PC-3 (cell line): ENCODE measurements at regions of chr1 and their contacts with region 1.

Region 1: DNA sequence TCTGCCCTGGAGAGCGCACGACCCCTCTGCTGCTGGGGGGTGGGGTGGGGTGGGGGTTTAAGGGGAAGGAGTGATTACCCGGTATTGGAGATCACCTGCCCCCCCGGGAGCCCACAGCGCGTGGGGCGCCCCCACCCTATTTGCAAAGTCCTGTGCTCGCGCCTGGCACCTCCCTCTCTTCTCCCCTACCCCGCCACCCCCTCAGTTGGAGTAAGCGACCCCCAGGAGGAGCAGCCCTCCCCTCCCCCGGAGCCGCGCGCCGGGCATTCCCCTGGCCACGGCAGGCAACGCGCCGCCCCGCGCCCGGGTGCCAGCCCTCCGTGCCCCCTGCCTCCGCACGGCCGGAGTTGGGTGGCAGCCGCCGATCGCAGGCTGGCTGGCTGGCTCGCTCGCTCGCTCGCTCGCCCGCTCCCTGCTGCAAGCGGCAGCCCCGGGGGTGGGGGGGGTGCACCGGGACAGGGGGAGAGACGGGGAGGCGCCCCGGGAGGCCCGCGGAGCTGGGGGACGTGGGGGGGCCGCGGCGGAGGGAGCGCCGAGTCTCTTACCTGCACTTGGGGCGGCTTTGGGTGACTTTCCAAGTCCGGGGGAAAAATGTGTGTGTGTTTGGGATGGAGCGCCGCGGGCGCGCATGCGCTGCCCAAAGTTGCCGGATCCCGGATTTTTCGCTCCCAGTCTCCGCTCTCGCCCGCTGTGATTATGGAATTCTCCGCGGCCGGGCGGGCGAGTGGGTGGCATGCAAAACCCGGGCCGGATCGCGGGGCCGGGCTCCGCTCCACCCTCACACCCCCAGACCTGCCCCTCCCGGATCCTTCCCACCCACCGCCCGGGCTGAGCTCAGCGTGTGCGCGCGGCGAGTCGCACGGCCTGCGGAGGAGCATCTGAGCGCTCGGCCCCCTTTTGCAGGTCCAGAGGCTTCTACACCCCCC is at the start of gene CASZ1:
- DNase-seq: peak; percentile 89
- ATAC-seq: peak; percentile 60
- H3K4me3 ChIP-seq: peak within 1 kb of the TSS; percentile 89
- H3K27ac ChIP-seq: no peak within 1 kb of the TSS
- H3K4me1 ChIP-seq: peaks cover 14% of the 10 kb centered on the region
- H3K27me3 ChIP-seq: no peaks in the 10 kb centered on the region
- CTCF ChIP-seq: no peak
- total RNA-seq, gene CASZ1: 12.8 and 21.4 TPM in 2 replicates

Region 2: DNA sequence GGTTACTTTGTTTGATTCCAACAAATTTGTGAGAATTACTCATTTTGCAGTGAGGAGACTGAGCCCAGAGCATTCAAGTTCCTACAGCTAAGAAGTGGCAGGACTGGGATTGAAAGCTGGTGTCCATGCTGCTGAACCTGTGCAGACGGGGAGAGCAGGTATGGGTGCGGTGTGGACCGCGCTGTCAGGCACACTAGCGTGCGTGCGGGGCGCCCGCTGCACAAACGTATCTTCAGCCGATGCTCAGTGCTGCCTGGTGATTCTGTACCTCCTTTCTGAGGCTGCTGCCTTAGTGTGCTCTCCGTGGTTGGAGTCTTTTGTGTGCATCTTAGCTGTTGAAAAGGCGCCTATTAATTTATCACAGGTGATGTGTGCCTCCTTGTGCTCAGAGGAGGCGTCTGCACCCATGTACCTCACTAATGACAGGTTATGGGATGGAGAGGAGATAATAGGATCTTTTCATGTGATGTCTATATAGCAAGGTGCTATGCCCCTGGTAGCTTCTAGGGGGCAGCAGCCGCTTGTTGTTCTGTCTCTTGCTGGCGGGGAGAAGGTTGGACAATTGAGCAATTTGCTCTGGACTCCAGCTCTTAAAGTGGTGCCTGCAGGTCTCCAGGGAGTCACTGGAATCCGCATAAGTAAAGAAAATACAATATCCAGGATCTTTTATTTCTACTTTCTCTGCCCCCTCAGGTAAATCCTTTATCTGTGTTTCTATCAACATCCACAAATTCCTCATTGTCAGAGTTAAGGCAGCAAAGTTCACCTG is 289.0 kb before region 1 on chr1:
- CTCF ChIA-PET with region 1: no interaction called
- POLR2A ChIA-PET with region 1: interaction called, 13 read pairs
- intact Hi-C with region 1: loop called (anchors 5 kb)
- DNase-seq: peak; percentile 70
- ATAC-seq: peak; percentile 39
- H3K4me3 ChIP-seq: no peak overlapping the region
- H3K27ac ChIP-seq: no peak overlapping the region
- H3K4me1 ChIP-seq: peaks cover 42% of the 10 kb centered on the region
- H3K27me3 ChIP-seq: no peaks in the 10 kb centered on the region
- CTCF ChIP-seq: peak; percentile 89

Region 3: DNA sequence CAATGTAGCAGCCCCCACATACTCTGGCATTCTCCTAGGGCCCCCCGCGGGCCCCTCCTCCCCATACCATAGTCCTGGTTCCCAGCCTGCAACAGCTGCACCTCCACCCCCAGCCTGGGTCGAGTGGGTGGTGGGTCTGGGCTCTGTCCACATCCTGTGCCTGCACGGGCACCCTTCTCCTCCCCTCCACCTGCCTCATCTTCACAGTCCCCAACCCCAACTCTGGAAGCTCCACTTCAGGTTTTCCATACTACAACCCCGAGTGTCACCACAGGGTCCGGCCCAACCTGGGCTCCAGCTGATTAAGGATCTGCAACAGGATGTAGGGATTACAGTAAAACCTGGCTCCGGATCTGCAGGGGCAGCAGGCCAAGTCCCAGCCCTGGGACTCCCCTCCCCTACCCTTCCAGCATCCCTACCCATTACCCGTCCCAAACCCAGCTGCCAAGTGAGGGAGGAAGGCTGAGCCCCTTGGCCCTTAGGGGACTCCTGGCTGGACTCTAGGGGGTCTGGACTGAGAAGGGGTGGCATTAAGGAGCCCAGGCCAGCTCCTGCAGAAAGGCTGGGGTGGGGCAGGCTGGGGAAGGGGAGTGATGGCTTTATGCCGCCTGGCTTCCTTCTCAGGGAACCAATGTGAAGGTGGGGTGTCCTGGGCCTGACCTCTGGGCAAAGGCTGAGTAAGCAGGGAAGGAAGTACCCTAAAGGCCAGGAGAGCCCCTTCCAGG is 116.6 kb before region 1 on chr1:
- CTCF ChIA-PET with region 1: interaction called, 3 read pairs
- POLR2A ChIA-PET with region 1: no interaction called
- intact Hi-C with region 1: loop called (anchors 1 kb)
- DNase-seq: peak; percentile 82
- ATAC-seq: peak; percentile 52
- H3K4me3 ChIP-seq: no peak overlapping the region
- H3K27ac ChIP-seq: no peak overlapping the region
- H3K4me1 ChIP-seq: peaks cover 16% of the 10 kb centered on the region
- H3K27me3 ChIP-seq: no peaks in the 10 kb centered on the region
- CTCF ChIP-seq: no peak

Region 4: GRCh38 chr1:10724948-10725847 is 71.1 kb before region 1 on chr1:
- CTCF ChIA-PET with region 1: no interaction called
- POLR2A ChIA-PET with region 1: no interaction called
- intact Hi-C with region 1: loop called (anchors 2 kb)
- DNase-seq: peak; percentile 25
- ATAC-seq: no peak
- H3K4me3 ChIP-seq: no peak overlapping the region
- H3K27ac ChIP-seq: no peak overlapping the region
- H3K4me1 ChIP-seq: peaks cover 43% of the 10 kb centered on the region
- H3K27me3 ChIP-seq: no peaks in the 10 kb centered on the region
- CTCF ChIP-seq: no peak

Region 5: DNA sequence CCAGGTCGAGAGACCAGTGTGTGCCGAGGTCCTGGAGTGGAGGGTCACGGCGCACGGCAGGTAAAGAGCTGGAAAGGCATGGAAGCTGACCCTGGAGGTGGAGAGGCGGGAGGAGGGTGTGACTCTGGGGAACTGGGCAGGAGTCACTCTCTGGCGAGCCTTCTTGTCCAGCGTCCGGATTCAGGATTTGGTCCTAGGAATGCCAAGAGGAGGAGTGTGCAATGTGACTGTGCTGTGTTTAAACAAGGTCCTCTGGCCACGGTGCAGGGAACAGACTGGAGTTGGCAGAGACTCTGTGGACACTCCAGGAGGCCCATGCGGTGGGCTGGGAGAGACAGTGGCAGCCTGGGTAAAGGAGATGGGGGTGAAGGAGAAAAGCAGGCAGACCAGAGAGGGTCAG is 64.4 kb after region 1 on chr1:
- CTCF ChIA-PET with region 1: interaction called, 13 read pairs
- POLR2A ChIA-PET with region 1: no interaction called
- intact Hi-C with region 1: no loop called
- DNase-seq: no peak
- ATAC-seq: no peak
- H3K4me3 ChIP-seq: no peak overlapping the region
- H3K27ac ChIP-seq: no peak overlapping the region
- H3K4me1 ChIP-seq: no peaks in the 10 kb centered on the region
- H3K27me3 ChIP-seq: no peaks in the 10 kb centered on the region
- CTCF ChIP-seq: no peak